ENCODE measurements at regions of chr1 and their contacts with region 1.

Region 1: GRCh38 chr1:184563308-184563707 is 176.5 kb downstream of the C1orf21 start:
- DNase-seq: no peak
- H3K4me3 ChIP-seq: no peak overlapping the region
- CTCF ChIP-seq: no peak
- POLR2A ChIP-seq: no peak

Region 2: GRCh38 chr1:184494929-184495328 is 68.4 kb before region 1 on chr1:
- intact Hi-C with region 1: no loop called
- DNase-seq: no peak
- H3K4me3 ChIP-seq: no peak overlapping the region
- CTCF ChIP-seq: no peak
- POLR2A ChIP-seq: no peak

Region 3: GRCh38 chr1:184650177-184650866 is 87.0 kb after region 1 on chr1:
- intact Hi-C with region 1: loop called (anchors 10 kb)
- DNase-seq: no peak
- H3K4me3 ChIP-seq: no peak overlapping the region
- CTCF ChIP-seq: no peak
- POLR2A ChIP-seq: no peak

Measured in lower leg skin (tissue), 4 donors.